ENCODE measurements at regions of chr15 and their contacts with region 1.

Region 1: GRCh38 chr15:25568751-25569150 is 129.9 kb upstream of the UBE3A start:
- DNase-seq: peak; percentile 10 to 73
- ATAC-seq: peak; percentile 83 to 91
- H3K4me3 ChIP-seq: no peak overlapping the region
- H3K27ac ChIP-seq: peak overlapping the region; percentile 5 to 37 (median 16)
- H3K4me1 ChIP-seq: peaks cover 33 to 36% of the 10 kb centered on the region in 2 donors
- H3K27me3 ChIP-seq: no peaks in the 10 kb centered on the region
- CTCF ChIP-seq: no peak
- POLR2A ChIP-seq: no peak

Region 2: DNA sequence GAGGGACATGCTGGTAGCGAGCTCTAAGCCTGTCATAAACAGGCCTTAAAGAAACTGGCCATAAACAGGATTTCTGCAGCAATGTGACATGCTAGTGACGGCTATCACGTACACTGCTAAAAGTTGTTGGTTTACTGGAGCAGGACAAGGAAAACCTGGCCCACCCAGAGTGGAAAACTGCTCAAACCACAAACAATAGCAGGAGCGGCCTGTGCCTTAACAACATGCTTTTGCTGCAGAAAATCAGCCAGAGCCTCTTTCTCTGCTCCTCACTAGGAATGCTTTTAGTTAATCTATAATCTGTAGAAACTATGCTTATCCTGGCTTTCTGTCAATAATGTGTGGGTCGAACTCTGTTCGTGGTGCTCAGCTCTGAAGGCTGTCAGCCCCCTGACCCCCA is 73.0 kb after region 1 on chr15:
- in situ Hi-C with region 1: no loop called
- intact Hi-C with region 1: loop called (anchors 10 kb)
- DNase-seq: no peak
- ATAC-seq: no peak
- H3K4me3 ChIP-seq: no peak overlapping the region
- H3K27ac ChIP-seq: no peak overlapping the region
- H3K4me1 ChIP-seq: no peaks in the 10 kb centered on the region
- H3K27me3 ChIP-seq: no peaks in the 10 kb centered on the region
- CTCF ChIP-seq: no peak
- POLR2A ChIP-seq: no peak

Measured in gastrocnemius medialis (tissue), 4 donors.